Activated CD4-positive, alpha-beta memory T cell treated with anti-CD3 and anti-CD28 coated beads, Interleukin-2, amount 10 ng/mL, durations not matched to agents 7 days and 5 days (primary cell): ENCODE measurements at regions of chr1 and their contacts with region 1.

Region 1: DNA sequence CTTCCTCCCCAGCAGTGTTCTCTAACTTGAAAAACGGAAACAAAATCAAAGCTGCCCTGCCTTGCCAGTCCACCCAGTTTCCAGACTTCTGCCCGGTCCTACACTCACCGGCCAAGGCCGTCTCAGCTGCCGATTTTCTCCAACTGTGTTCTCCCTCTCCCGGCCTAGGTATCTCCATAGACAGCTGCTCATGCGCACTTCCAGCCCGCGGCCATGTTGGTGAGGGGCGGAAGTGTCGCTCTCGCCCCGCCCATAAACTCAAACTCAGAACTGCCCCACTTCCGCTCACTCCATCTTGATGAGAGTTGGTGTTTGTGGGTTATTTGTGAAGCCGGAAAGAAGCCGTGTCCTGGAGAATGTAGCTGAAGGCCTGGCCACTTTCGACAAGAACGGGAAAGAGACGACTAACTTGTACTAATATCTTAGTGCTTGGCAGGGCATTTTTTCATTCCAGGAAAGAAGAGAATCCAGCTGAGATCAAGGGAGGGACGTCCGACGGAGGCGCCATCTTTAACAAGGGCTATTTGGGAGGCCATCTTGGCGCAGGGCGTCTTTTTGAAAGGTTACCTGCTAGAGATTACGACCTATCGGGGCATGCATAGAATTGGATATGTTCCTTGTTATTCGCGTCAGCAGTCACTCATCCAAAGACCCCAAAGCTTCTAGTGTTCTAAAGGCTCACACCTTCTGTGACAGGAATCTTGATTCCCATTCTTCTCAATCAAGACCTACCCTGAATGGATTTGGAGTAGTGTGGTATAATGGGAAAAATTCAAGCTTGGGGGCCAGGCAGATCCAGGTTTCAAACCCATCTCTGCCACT is at the start of gene USF1:
- DNase-seq: peak; percentile 96
- H3K4me3 Mint-ChIP-seq: peak within 1 kb of the TSS; percentile 88
- H3K27ac Mint-ChIP-seq: peak within 1 kb of the TSS; percentile 97
- H3K4me1 Mint-ChIP-seq: peaks cover 58% of the 10 kb centered on the region
- H3K27me3 Mint-ChIP-seq: no peaks in the 10 kb centered on the region
- total RNA-seq, gene USF1: 67.4 to 68.0 TPM

Region 2: GRCh38 chr1:160844447-160845232 is 201.3 kb before region 1 on chr1:
- CTCF ChIA-PET with region 1: no interaction called
- POLR2A ChIA-PET with region 1: no interaction called
- DNase-seq: peak; percentile 39
- H3K4me3 Mint-ChIP-seq: no peak overlapping the region
- H3K27ac Mint-ChIP-seq: peak overlapping the region; percentile 36
- H3K4me1 Mint-ChIP-seq: peaks cover 22% of the 10 kb centered on the region
- H3K27me3 Mint-ChIP-seq: peaks cover 15% of the 10 kb centered on the region

Region 3: GRCh38 chr1:160877221-160877620 is 168.7 kb before region 1 on chr1:
- CTCF ChIA-PET with region 1: no interaction called
- POLR2A ChIA-PET with region 1: no interaction called
- DNase-seq: no peak
- H3K4me3 Mint-ChIP-seq: no peak overlapping the region
- H3K27ac Mint-ChIP-seq: no peak overlapping the region
- H3K4me1 Mint-ChIP-seq: peaks cover 8% of the 10 kb centered on the region
- H3K27me3 Mint-ChIP-seq: peaks cover 5% of the 10 kb centered on the region

Region 4: GRCh38 chr1:160997323-160998038 is 48.5 kb before region 1 on chr1:
- CTCF ChIA-PET with region 1: interaction called, 8 read pairs
- POLR2A ChIA-PET with region 1: interaction called, 13 read pairs
- DNase-seq: peak; percentile 59
- H3K4me3 Mint-ChIP-seq: no peak overlapping the region
- H3K27ac Mint-ChIP-seq: no peak overlapping the region
- H3K4me1 Mint-ChIP-seq: peaks cover 9% of the 10 kb centered on the region
- H3K27me3 Mint-ChIP-seq: no peaks in the 10 kb centered on the region

Region 5: DNA sequence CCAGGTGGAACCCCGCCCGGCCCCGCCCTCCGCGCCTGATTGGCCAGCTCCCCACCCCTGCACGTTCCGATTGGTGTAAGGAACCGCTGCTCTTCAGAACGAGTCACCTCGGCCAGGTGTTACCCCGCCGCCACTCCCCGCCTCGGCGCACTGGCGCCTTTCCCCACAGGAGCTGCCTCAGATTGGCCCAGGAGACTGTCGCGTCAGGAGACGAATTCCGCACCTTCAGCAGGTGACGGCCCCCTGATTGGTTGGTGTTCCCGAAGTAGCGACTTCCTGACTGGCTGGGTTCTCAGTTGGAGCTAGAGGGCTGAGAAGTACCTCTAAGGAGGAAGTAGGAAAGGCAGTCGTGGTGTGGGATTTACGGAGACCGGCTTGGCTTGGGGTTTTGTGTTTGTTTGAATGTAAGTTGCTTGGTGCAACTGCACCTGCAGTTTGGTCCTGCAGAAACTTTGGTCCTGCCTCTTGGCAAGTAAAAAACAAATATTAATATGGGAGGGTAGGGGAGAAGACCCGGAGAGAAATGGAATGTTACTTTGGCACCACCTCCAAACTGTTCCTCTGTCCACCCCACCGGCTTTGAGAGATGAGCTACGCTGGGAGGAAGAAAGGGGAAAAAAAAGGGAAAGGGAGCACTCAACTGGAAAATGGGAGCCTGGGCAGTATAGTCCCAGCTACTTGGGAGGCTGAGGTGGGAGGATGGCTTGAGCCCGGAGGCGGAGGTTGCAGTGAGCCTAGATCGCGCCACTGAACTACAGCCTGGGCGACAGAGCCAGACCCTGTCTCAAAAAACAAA is 24.6 kb before region 1 on chr1:
- CTCF ChIA-PET with region 1: interaction called, 6 read pairs
- POLR2A ChIA-PET with region 1: interaction called, 41 read pairs
- DNase-seq: peak; percentile 86
- H3K4me3 Mint-ChIP-seq: peak overlapping the region; percentile 85
- H3K27ac Mint-ChIP-seq: peak overlapping the region; percentile 65
- H3K4me1 Mint-ChIP-seq: peaks cover 31% of the 10 kb centered on the region
- H3K27me3 Mint-ChIP-seq: peaks cover 4% of the 10 kb centered on the region

Region 6: DNA sequence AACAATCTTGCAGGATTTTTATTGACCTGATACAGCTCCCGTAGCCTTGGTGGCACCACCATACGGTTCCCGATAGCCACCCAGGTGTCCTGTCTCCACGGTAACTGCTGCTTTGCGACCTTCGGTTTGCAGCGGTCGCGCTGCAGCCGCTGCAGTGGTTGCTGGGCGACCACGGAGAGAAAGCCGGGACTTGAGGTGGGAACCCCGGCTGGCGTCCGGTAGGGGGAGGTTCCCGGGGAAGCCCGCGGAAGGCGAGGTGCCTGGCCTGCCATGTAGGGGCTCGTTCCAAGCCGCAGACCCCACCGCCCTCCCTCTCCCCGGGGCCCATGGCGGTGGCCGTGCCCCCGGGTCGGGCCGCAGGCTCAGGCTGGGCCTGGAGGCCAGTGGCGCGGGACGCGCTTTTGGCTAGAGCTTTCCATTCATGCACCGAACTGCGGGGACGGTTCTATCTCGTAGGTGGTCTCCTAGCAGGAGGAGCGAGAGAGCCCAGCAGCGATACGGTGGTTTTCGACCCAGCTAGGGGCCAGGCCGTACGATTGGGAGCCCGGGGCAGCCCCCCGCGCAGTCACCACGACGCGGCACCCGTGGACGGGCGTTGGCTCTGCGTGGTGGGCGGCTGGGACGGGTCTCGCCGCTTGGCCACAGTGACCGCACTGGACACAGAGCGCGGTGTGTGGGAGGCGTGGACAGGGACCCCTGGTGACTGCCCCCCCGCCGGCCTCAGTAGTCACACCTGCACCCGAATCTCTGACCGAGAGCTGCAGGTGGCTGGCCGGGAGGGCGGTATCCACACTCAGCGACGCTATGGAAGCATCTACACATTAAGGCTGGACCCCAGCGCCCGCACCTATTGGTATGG is 52.5 kb after region 1 on chr1 and contains the start of gene KLHDC9:
- CTCF ChIA-PET with region 1: interaction called, 46 read pairs
- POLR2A ChIA-PET with region 1: interaction called, 78 read pairs
- DNase-seq: peak; percentile 81
- H3K4me3 Mint-ChIP-seq: peak within 1 kb of the TSS; percentile 85
- H3K27ac Mint-ChIP-seq: peak within 1 kb of the TSS; percentile 69
- H3K4me1 Mint-ChIP-seq: peaks cover 23% of the 10 kb centered on the region
- H3K27me3 Mint-ChIP-seq: peaks cover 6% of the 10 kb centered on the region
- total RNA-seq, gene KLHDC9: 1.2 TPM

Region 7: GRCh38 chr1:161132410-161133219 is 86.7 kb after region 1 on chr1 and contains the start of gene DEDD:
- CTCF ChIA-PET with region 1: interaction called, 4 read pairs
- POLR2A ChIA-PET with region 1: interaction called, 16 read pairs
- DNase-seq: peak; percentile 94
- H3K4me3 Mint-ChIP-seq: no peak within 1 kb of the TSS
- H3K27ac Mint-ChIP-seq: no peak within 1 kb of the TSS
- H3K4me1 Mint-ChIP-seq: peaks cover 43% of the 10 kb centered on the region
- H3K27me3 Mint-ChIP-seq: no peaks in the 10 kb centered on the region
- total RNA-seq, gene DEDD: 38.2 to 40.0 TPM

Region 8: DNA sequence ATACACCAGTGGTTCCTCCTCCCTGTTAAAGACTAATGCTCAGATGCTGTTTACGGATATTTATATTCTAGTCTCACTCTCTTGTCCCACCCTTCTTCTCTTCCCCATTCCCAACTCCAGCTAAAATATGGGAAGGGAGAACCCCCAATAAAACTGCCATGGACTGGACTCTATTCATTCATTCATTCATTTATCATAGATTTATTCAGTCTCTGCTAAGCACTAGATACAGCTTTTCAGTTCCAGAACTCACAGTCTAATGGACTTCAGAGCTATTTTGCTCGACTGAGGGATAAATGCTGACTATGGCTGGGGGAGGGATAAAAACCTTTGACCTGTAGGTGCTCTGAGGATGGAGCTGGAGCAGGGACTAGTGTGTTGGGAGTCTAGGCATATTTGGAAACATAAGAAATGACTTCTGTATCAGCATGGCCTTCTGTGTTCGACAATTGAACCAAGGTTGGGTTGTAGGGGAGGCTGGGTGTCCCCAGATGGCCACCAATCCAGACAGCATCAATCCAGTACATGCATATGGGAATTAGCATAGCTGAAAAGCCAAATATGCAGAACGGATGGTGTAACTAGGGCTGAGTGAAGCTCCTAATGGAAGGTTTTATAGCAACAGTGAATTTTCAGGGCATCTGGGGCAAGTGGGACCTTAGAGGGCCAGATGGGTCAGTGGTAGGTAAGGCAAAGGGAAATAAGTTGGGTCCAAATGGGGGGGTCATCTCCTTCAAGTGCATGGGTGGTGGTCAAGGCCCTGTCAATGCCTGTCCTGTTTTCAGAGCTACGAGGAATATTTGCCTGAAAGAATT is 173.3 kb after region 1 on chr1:
- CTCF ChIA-PET with region 1: no interaction called
- POLR2A ChIA-PET with region 1: no interaction called
- DNase-seq: no peak
- H3K4me3 Mint-ChIP-seq: no peak overlapping the region
- H3K27ac Mint-ChIP-seq: no peak overlapping the region
- H3K4me1 Mint-ChIP-seq: peaks cover 43% of the 10 kb centered on the region
- H3K27me3 Mint-ChIP-seq: no peaks in the 10 kb centered on the region